WTC11 (cell line): ENCODE measurements at regions of chr16 and their contacts with region 1.

Region 1: DNA sequence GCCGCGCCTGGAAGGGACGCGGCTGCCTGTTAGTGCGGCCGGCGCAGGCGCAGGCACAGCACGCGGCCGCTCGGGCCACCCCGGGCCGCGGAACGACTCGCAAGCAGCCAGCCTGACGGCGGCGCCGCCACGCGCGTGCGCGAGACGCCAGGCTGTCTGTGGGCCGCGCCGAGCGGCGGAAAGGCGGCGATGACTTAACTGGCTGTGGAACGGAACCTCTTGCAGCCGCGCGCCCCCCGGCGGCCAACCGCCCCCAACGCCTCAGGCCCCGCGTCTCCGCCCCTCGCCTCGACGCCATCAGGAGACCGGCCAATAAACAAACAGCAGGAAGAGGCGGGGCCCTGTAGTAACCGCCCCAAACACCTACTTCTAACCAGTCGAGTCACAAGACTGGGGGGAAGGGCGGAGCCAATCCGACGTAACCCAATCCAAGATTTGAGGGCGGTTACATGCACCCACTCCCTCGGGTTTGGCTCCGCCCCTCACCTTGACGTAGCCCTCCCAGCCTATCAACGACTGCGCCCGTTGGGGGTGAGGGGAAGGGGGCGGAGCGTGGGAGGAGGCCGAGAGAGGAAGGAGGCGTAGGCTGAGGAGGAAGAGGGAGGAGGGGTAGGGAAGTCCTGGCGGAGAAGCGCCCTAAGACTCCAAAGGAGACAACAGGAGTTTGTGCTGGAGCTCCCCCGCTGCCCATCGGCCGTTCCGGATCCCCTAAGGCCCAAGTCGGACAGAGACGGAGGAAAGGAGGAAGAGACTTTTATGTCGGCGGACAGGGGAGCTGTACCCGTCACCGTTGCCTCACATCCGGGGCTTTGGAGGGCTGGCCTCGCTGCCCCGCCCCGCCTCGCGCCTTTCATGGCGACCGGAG is at the start of gene FBRS:
- DNase-seq: peak; percentile 100
- ATAC-seq: peak; percentile 93
- H3K4me3 Mint-ChIP-seq: peak within 1 kb of the TSS; percentile 96
- H3K27ac Mint-ChIP-seq: peak within 1 kb of the TSS; percentile 100
- H3K4me1 Mint-ChIP-seq: peaks cover 9% of the 10 kb centered on the region
- H3K27me3 Mint-ChIP-seq: peaks cover 37% of the 10 kb centered on the region
- CTCF ChIP-seq: peak; percentile 62; the same call in 1 of the 2 replicates
- total RNA-seq, gene FBRS: 18.9 to 23.2 TPM (median 19.9 TPM) in 3 replicates

Region 2: DNA sequence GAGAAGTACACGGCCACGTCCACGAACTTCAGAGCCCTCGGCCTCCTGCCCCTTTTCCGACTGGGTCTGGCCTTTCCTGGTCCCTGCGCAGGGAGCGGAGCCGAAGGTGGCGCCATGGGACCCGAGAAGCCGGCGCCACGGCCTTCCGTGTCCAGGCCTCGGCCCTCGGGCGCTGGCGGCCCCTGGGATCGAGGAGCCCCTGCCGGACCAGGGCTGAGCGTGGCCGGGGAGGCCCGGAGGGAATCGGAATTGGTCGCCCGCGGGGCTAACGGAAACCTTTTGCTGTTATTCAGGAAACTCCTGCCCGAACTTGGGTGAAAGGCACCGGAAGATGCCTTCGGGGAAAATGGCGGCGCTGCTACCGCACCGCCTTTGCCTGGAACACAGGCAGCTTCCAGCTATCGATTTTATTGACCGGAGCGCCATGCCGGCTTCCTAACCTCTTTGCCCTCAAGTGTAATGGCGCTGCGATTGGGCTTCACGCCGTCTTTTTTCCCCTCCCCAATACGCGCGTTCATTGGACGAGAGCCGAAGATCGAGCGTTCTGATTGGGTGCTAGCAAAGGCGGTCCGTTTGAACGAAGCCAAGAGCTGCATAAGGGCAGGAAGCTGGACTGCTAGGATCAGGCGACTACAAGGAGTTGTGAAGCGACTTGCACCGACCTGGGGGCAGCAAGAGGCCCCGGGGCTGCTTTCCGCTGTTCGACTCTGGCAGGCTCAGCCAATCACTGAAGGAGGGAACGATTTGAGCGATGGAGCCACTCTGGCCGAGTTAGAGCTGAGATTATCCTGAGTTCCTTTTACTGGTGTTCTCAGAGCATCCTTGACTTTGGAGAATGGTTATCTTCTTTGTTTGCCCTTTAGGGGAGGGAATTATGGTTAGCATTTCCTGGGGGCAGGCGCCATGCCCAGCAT is 47.9 kb before region 1 on chr16 and contains the start of gene ZNF689:
- CTCF ChIA-PET with region 1: interaction called, 5 read pairs
- POLR2A ChIA-PET with region 1: interaction called, 10 read pairs
- DNase-seq: peak; percentile 96
- ATAC-seq: peak; percentile 93
- H3K4me3 Mint-ChIP-seq: peak within 1 kb of the TSS; percentile 84
- H3K27ac Mint-ChIP-seq: peak within 1 kb of the TSS; percentile 97
- H3K4me1 Mint-ChIP-seq: peaks cover 3% of the 10 kb centered on the region; the same call in 1 of the 2 replicates
- H3K27me3 Mint-ChIP-seq: no peaks in the 10 kb centered on the region; the same call in 1 of the 2 replicates
- CTCF ChIP-seq: no peak
- total RNA-seq, gene ZNF689: 13.2 to 16.3 TPM (median 15.9 TPM) in 3 replicates

Region 3: GRCh38 chr16:30622455-30623047 is 35.5 kb before region 1 on chr16:
- CTCF ChIA-PET with region 1: no interaction called
- POLR2A ChIA-PET with region 1: no interaction called
- DNase-seq: no peak
- ATAC-seq: no peak
- H3K4me3 Mint-ChIP-seq: no peak overlapping the region
- H3K27ac Mint-ChIP-seq: no peak overlapping the region
- H3K4me1 Mint-ChIP-seq: 0 out of 2 replicates have a peak, but pooled peaks cover 3% of the 10 kb centered on the region
- H3K27me3 Mint-ChIP-seq: peaks cover 55% of the 10 kb centered on the region
- CTCF ChIP-seq: no peak